ENCODE measurements at regions of chr3 and their contacts with region 1.

Region 1: DNA sequence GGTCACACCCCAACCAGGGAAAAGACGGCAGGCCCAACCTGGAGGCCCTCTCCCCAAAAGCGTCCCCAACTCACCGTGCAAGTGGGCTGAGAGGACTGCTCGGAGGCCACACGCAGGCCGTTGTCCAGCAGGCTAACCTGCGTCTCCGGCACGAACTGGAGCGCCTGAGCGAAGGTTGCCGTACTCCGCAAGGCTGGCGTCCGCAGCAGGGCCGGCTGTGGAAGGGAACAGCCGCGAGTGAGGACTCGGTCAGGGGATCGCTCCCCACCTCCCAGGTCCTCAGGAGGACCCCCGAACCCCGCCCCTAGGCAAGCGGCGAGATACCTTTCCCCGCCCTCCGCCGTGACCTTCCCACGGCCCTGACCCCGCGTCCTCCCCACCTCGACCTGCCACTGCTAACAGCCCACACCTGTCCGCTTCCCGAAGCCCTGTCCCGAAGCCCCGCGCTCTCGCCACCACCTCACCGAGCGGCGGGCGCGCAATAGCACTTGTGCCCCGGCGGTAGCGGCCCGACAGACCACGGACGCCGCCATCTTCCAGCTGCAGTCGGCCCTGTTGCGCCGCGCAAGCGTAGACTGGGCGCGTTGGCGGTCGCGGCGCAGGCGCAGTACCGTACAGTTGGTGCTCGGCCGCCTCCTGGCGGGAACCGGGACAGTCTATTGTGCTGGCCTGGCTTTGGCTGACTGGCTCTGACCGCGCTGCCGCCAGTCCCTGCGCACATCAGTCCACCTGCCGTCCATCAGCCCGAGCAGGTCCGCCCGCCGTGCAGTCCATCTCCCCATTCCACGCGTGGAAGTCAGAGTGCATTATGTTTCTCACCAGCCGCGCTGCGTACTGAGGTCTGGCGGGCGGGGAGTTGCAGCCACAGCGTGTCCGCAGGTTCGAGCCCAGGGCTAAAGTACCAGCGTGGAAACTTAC is at the start of gene UQCRC1:
- DNase-seq: peak; percentile 96
- ATAC-seq: peak; percentile 96
- H3K4me3 Mint-ChIP-seq: peak within 1 kb of the TSS; percentile 97
- H3K27ac Mint-ChIP-seq: peak within 1 kb of the TSS; percentile 95
- H3K4me1 Mint-ChIP-seq: peaks cover 27% of the 10 kb centered on the region
- H3K27me3 Mint-ChIP-seq: no peaks in the 10 kb centered on the region
- total RNA-seq, gene UQCRC1: 205 to 231 TPM

Region 2: DNA sequence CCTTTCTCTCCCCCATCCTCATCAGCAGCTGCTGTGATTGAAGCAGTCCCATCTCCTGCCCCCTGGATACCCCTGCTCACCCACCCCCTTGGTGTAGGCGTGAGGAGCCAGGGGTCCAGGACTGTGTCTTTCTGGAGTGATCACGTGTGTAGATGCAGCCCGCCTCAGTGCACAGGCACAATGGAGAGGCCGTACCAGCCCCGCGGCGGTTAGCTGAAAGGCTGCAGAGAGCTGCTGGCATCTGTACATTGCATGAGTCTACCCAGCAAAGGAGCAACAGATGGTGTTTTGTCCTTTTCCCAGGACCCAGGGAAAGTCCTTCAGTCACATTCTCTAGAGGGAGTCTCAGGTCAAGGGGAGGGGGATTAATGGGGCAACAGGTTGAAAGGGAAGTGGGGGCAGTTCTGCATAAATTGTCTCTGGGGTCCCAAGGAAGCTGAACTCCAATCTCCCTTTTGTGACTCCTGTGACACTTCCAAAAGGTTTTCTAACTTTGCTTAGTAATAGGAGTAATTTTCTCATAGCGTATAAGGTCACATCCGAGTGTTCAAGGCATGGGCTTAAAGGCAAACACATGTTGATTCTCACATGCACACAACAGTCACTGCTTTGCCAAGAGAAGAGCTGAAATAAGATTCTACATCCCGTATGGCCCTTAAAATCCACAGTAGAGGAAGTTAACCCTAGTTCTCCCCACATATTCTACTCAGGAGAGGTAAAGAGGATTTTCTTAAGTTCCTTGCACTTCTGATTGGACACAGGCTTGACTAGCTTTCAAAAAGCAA is 1037.8 kb before region 1 on chr3:
- CTCF ChIA-PET with region 1: no interaction called
- POLR2A ChIA-PET with region 1: no interaction called
- intact Hi-C with region 1: no loop called
- DNase-seq: no peak
- ATAC-seq: no peak
- H3K4me3 Mint-ChIP-seq: no peak overlapping the region
- H3K27ac Mint-ChIP-seq: no peak overlapping the region
- H3K4me1 Mint-ChIP-seq: no peaks in the 10 kb centered on the region
- H3K27me3 Mint-ChIP-seq: peaks cover 6% of the 10 kb centered on the region

Region 3: DNA sequence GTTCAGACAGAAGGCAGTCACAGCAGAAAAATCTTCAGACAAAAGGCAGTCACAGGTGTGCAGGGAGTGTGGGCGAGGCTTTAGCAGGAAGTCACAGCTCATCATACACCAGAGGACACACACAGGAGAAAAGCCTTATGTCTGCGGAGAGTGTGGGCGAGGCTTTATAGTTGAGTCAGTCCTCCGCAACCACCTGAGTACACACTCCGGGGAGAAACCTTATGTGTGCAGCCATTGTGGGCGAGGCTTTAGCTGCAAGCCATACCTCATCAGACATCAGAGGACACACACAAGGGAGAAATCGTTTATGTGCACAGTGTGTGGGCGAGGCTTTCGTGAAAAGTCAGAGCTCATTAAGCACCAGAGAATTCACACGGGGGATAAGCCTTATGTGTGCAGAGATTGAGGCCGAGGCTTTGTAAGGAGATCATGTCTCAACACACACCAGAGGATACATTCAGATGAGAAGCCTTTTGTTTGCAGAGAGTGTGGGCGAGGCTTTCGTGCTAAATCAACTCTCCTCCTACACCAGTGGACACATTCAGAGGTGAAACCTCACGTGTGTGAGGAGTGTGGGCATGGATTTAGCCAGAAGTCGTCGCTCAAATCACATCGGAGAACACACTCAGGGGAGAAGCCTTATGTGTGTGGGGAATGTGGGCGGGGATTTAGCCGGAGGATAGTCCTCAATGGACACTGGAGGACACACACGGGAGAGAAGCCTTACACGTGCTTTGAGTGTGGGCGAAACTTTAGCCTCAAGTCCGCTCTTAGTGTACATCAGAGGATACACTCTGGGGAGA is 340.8 kb before region 1 on chr3:
- CTCF ChIA-PET with region 1: no interaction called
- POLR2A ChIA-PET with region 1: no interaction called
- intact Hi-C with region 1: loop called in 1 of 2 experiments (anchors 1 kb)
- DNase-seq: peak; percentile 95
- ATAC-seq: peak; percentile 91
- H3K4me3 Mint-ChIP-seq: peak overlapping the region; percentile 57
- H3K27ac Mint-ChIP-seq: peak overlapping the region; percentile 92
- H3K4me1 Mint-ChIP-seq: peaks cover 39% of the 10 kb centered on the region
- H3K27me3 Mint-ChIP-seq: no peaks in the 10 kb centered on the region

Region 4: DNA sequence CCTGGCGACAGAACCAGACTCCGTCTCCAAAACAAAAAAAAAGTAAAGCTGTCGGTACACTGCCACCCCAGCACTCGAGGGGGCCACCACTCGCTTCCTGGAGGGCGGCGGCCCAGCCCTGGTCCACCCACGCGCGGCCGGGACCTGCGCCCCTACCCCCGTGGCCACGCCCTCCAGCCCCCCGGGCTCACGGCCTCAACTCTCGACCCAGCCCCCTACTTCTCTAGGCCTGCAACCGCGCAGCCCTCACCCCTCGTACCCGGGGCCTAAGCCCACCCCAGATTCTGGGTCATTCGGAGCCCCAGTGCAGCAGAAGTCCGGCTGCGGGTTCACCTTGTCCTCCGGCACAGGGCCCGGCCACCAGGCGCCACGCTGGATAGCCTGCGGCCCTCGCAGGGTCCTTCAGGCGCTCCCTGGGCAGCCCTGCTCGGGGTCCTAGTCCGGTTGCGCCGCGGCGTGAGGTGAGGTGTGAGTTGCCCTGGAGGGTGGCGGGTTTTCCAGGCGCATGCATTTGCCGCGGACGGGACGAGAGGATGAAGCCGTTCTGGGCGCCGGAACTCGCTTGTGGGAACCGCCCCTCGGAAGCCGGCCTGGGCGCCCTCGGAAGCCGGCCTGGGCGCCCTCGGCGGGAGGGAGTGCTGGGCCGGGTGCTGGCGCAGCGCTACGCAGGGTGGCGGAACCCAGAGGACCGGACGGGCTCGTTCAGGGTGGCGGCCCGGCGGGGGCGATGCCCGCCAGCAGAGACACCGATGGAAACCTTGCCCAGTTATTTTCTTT is 308.1 kb before region 1 on chr3:
- CTCF ChIA-PET with region 1: no interaction called
- POLR2A ChIA-PET with region 1: no interaction called
- intact Hi-C with region 1: loop called in 1 of 2 experiments (anchors 2 kb)
- DNase-seq: peak; percentile 97
- ATAC-seq: peak; percentile 85
- H3K4me3 Mint-ChIP-seq: peak within 1 kb of the TSS; percentile 92
- H3K27ac Mint-ChIP-seq: peak within 1 kb of the TSS; percentile 98
- H3K4me1 Mint-ChIP-seq: peaks cover 27% of the 10 kb centered on the region
- H3K27me3 Mint-ChIP-seq: no peaks in the 10 kb centered on the region

Region 5: GRCh38 chr3:48472915-48473616 is 136.3 kb before region 1 on chr3:
- CTCF ChIA-PET with region 1: no interaction called
- POLR2A ChIA-PET with region 1: interaction called, 6 read pairs
- intact Hi-C with region 1: loop called in 1 of 2 experiments (anchors 1 kb)
- DNase-seq: peak; percentile 99
- ATAC-seq: peak; percentile 90
- H3K4me3 Mint-ChIP-seq: peak overlapping the region; percentile 74
- H3K27ac Mint-ChIP-seq: peak overlapping the region; percentile 93
- H3K4me1 Mint-ChIP-seq: peaks cover 49% of the 10 kb centered on the region
- H3K27me3 Mint-ChIP-seq: no peaks in the 10 kb centered on the region

Region 6: GRCh38 chr3:48635222-48636021 is 26.1 kb after region 1 on chr3 and contains the start of gene SLC26A6:
- CTCF ChIA-PET with region 1: interaction called, 20 read pairs
- POLR2A ChIA-PET with region 1: interaction called, 5 read pairs
- intact Hi-C with region 1: loop called (anchors 1 kb)
- DNase-seq: peak; percentile 97
- ATAC-seq: peak; percentile 97
- H3K4me3 Mint-ChIP-seq: peak within 1 kb of the TSS; percentile 84
- H3K27ac Mint-ChIP-seq: peak within 1 kb of the TSS; percentile 76
- H3K4me1 Mint-ChIP-seq: peaks cover 13% of the 10 kb centered on the region
- H3K27me3 Mint-ChIP-seq: no peaks in the 10 kb centered on the region
- total RNA-seq, gene SLC26A6: 35.0 to 38.5 TPM

Region 7: GRCh38 chr3:48650723-48651122 is 41.4 kb after region 1 on chr3:
- CTCF ChIA-PET with region 1: no interaction called
- POLR2A ChIA-PET with region 1: no interaction called
- intact Hi-C with region 1: no loop called
- DNase-seq: no peak
- ATAC-seq: no peak
- H3K4me3 Mint-ChIP-seq: no peak overlapping the region
- H3K27ac Mint-ChIP-seq: no peak overlapping the region
- H3K4me1 Mint-ChIP-seq: peaks cover 5% of the 10 kb centered on the region
- H3K27me3 Mint-ChIP-seq: no peaks in the 10 kb centered on the region

Region 8: DNA sequence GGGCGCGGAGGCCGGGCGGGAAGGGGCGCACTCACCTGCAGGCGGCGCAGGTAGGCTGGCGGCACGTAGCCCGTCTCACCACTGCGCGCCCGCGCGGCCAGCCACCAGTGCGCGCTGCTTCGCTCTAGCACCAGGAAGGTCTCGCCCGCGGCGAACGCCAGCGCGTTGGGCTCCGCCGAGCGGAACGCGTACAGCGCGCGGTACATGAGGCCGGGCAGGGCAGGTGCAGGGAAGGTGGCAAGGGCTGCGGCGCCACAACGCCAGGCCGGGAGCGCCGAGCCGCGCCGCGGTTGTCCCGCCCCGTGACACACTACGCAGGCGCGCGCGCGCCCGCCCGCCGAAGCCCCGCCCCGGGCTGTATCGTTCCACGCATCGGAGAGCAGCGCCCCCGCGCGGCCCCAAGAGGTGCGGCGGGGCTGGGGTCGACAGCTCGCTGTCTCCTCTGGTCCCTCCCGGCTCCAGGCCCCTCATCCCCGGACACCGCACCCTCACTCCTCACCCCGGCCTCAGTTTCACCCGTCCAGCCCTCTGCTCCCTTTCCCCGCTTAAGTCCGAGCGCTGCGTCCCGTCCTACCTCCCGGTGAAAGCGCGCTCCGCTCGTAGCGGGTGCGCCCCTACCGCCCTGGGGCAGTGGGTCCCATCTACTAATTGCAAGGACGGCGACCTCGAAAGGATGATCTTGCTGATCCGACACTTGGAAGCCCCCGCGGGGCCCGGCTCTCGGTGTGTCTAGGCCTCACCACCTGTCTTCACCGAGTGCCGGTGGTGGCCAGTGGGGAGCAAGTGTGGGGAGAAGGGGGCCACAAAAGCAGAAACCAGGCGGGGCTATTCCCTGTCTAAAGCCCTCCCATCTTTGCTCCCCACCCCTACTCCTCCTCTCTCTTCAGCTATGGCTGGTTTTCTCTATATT is 76.5 kb after region 1 on chr3 and contains the start of gene NCKIPSD:
- CTCF ChIA-PET with region 1: interaction called, 3 read pairs
- POLR2A ChIA-PET with region 1: interaction called, 3 read pairs
- intact Hi-C with region 1: loop called in 1 of 2 experiments (anchors 1 kb)
- DNase-seq: peak; percentile 96
- ATAC-seq: peak; percentile 94
- H3K4me3 Mint-ChIP-seq: peak within 1 kb of the TSS; percentile 82
- H3K27ac Mint-ChIP-seq: peak within 1 kb of the TSS; percentile 68
- H3K4me1 Mint-ChIP-seq: peaks cover 16% of the 10 kb centered on the region
- H3K27me3 Mint-ChIP-seq: no peaks in the 10 kb centered on the region
- total RNA-seq, gene NCKIPSD: 61.0 to 67.3 TPM